HepG2 (cell line): ENCODE measurements at regions of chr9 and their contacts with region 1.

Region 1: GRCh38 chr9:120464176-120464886 is 115.6 kb downstream of the CDK5RAP2 start:
- DNase-seq: no peak
- ATAC-seq: no peak
- H3K4me3 ChIP-seq: no peak overlapping the region
- H3K27ac ChIP-seq: no peak overlapping the region
- H3K4me1 ChIP-seq: no peaks in the 10 kb centered on the region
- H3K27me3 ChIP-seq: no peaks in the 10 kb centered on the region
- CTCF ChIP-seq: no peak
- EP300 ChIP-seq: no peak
- POLR2A ChIP-seq: no peak
- RAD21 ChIP-seq: no peak

Region 2: GRCh38 chr9:120016231-120016630 is 448.1 kb before region 1 on chr9:
- CTCF ChIA-PET with region 1: no interaction called
- POLR2A ChIA-PET with region 1: no interaction called
- in situ Hi-C with region 1: no loop called
- intact Hi-C with region 1: no loop called
- DNase-seq: no peak
- ATAC-seq: no peak
- H3K4me3 ChIP-seq: no peak overlapping the region
- H3K27ac ChIP-seq: no peak overlapping the region
- H3K4me1 ChIP-seq: no peaks in the 10 kb centered on the region
- H3K27me3 ChIP-seq: peaks cover 2 to 3% of the 10 kb centered on the region in 2 experiments; a peak in 2 of 5 replicates
- CTCF ChIP-seq: no peak
- EP300 ChIP-seq: no peak
- POLR2A ChIP-seq: no peak
- RAD21 ChIP-seq: no peak

Region 3: DNA sequence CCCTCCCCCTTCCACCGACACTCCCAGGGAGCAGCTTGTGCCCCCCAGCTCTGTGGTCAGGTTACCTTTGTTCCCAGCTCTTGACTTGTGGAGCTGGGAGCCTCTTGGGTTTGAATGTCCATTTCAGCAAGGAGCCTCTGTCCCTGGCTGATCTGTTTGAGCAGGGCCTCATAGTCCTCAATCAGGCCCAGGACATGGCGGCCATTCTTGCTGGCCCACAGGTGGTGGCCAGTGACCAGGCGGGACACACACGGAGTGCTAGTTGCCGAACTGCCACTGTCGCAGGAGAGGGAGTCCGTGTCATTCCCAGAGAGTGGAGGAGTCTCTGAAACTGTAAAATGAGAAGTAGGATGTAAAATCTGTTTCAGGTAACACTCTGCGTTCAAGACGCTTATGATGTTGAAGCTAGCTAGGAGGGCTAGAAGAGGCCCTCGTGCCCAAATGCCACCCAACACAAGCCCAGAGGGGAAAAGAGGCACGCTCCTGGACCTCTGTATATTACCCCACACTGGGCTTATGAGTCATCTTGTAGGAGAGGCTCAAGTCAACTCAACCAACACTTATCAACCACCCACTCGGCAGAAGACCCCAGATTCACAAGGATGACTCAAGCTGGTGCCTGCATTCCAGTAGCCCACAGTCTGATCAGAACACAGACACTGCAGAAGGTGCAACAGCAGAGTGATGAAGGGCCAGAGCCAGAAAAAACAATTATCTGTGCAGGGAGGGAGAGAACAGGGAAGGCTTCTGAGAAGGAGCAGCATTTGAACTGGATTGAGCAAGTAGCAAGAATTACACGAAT is 61.4 kb before region 1 on chr9:
- CTCF ChIA-PET with region 1: no interaction called
- POLR2A ChIA-PET with region 1: no interaction called
- in situ Hi-C with region 1: loop called (anchors 10 kb)
- intact Hi-C with region 1: no loop called
- DNase-seq: no peak
- ATAC-seq: peak; percentile 33
- H3K4me3 ChIP-seq: no peak overlapping the region
- H3K27ac ChIP-seq: peak overlapping the region; percentile 47
- H3K4me1 ChIP-seq: peaks cover 19% of the 10 kb centered on the region
- H3K27me3 ChIP-seq: no peaks in the 10 kb centered on the region
- CTCF ChIP-seq: no peak
- EP300 ChIP-seq: 0 out of 4 replicates have a peak, but pooled peaks of 1 of the 2 experiments have one; percentile 8
- POLR2A ChIP-seq: no peak
- RAD21 ChIP-seq: no peak